HepG2 (cell line): ENCODE measurements at regions of chr5 and their contacts with region 1.

Region 1: GRCh38 chr5:180950291-180950949 is 38.2 kb upstream of the BTNL3 start:
- DNase-seq: no peak
- ATAC-seq: no peak
- H3K4me3 ChIP-seq: no peak overlapping the region
- H3K27ac ChIP-seq: no peak overlapping the region
- H3K4me1 ChIP-seq: no peaks in the 10 kb centered on the region
- H3K27me3 ChIP-seq: no peaks in the 10 kb centered on the region
- CTCF ChIP-seq: no peak
- EP300 ChIP-seq: no peak
- POLR2A ChIP-seq: no peak
- RAD21 ChIP-seq: no peak

Region 2: GRCh38 chr5:181005791-181006190 is 55.4 kb after region 1 on chr5:
- CTCF ChIA-PET with region 1: no interaction called
- POLR2A ChIA-PET with region 1: no interaction called
- in situ Hi-C with region 1: loop called (anchors 5 kb)
- intact Hi-C with region 1: loop called (anchors 5 kb)
- DNase-seq: no peak
- ATAC-seq: no peak
- H3K4me3 ChIP-seq: no peak overlapping the region
- H3K27ac ChIP-seq: no peak overlapping the region
- H3K4me1 ChIP-seq: no peaks in the 10 kb centered on the region
- H3K27me3 ChIP-seq: peaks cover 0 to 12% of the 10 kb centered on the region in 2 experiments; a peak in 2 of 5 replicates
- CTCF ChIP-seq: no peak
- EP300 ChIP-seq: no peak
- POLR2A ChIP-seq: no peak
- RAD21 ChIP-seq: no peak